Mammary epithelial cell (primary cell): ENCODE measurements at regions of chr1 and their contacts with region 1.

Region 1: DNA sequence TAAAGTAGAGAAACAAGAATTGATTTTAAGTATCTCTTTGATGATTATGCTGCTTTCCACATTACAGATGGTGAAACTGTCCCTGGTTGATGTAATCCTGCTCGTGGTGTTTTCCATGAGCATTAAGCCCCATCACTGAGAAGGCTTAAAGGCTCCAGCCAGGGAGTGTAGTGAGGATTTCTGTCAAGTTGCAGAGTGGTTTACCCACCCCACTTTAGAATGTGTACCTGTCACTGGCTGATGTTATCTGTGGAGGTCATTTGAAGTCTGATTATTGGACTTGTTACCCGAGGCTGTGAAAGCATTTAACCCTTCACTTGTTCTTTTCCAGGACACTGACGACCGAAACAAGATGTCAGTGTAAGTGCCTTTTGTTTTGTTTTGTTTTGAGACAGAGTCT is 12.8 kb downstream of the CERS2 start:
- DNase-seq: no peak
- H3K4me3 ChIP-seq: no peak overlapping the region
- H3K27ac ChIP-seq: no peak overlapping the region
- H3K4me1 ChIP-seq: no peaks in the 10 kb centered on the region
- H3K27me3 ChIP-seq: no peaks in the 10 kb centered on the region
- CTCF ChIP-seq: no peak

Region 2: GRCh38 chr1:150915192-150915591 is 46.6 kb before region 1 on chr1:
- CTCF ChIA-PET with region 1: interaction called, 21 read pairs
- dilution Hi-C with region 1: no loop called
- in situ Hi-C with region 1: no loop called
- intact Hi-C with region 1: no loop called
- DNase-seq: no peak
- H3K4me3 ChIP-seq: no peak overlapping the region
- H3K27ac ChIP-seq: no peak overlapping the region
- H3K4me1 ChIP-seq: no peaks in the 10 kb centered on the region
- H3K27me3 ChIP-seq: no peaks in the 10 kb centered on the region
- CTCF ChIP-seq: no peak

Region 3: DNA sequence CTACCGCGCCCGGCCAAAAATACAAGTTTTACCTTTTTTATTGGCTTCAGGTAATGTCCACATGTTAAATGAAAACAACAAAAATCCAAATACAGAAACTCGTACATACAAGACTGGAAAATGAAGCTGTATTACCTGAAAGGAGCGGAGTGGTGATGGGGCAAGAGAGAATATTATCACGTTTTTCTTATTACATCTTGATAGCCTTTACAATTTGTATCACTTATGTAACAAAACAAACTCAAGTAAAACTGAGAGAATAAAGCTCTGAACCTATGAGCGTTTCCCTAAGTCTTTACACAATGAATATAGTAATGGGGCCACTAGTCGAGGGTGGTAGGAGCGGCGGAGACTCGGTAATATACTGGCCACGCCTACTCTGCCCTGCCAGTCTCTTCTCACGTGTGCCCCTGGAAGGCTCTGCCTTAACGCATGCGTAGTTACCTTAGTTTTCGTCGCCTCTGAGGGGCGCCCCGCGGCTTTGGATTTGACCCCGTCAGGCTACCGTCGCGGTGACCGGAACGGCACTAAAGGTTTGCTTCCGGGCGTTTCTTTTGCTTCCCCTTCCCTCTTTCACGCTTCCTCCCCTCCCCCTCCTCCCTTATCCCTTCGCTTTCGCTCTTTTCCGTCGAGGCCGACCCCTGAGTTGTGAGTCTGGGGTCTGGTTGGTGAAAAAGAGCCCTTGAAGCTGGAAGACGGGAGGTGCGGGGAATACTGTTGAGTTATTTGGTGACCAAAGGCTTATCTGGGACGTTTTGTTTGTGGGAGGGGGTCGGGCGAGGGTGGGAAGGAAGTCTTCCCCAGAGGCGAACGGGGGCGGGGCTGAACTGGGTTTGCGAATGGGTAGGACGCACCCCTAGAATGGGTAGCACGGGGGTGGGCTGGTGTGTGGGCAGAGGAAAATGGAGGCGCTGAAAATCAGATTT is 35.7 kb before region 1 on chr1 and contains the start of gene SETDB1:
- CTCF ChIA-PET with region 1: no interaction called
- dilution Hi-C with region 1: no loop called
- in situ Hi-C with region 1: no loop called
- intact Hi-C with region 1: no loop called
- DNase-seq: peak; percentile 92
- H3K4me3 ChIP-seq: peak within 1 kb of the TSS; percentile 70 to 100 (median 88)
- H3K27ac ChIP-seq: peak within 1 kb of the TSS; percentile 75
- H3K4me1 ChIP-seq: peaks cover 11% of the 10 kb centered on the region
- H3K27me3 ChIP-seq: no peaks in the 10 kb centered on the region
- CTCF ChIP-seq: peak in 1 of 2 donors; percentile 23
- total RNA-seq, gene SETDB1: 30.3 TPM